Posterior cingulate gyrus (tissue), 11 donors: ENCODE measurements at regions of chr2 and their contacts with region 1.

Region 1: GRCh38 chr2:52518678-52519077 is 1248.9 kb upstream of the CHAC2 start:
- DNase-seq: no peak

Region 2: DNA sequence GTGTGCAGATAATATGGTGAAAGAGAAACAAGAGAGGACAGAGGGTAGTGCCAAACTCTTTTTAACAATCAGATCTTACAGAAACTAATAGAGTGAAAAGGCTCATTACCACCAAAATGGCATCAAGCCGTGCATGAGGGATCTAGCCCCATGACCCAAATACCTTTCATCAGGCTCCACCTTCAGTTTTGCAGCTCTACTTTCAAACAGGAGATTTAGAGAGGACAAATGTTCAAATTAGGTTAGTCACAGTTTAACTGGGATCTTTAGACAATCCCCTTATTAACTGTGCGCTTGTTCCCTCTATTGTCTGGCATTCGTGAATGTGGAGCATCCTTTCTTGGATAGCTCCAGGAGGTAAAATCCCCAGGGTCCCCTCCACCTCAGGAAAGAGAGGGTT is 39.6 kb after region 1 on chr2:
- intact Hi-C with region 1: loop called (anchors 1 kb)
- DNase-seq: no peak